A673 (cell line): ENCODE measurements at regions of chr7 and their contacts with region 1.

Region 1: GRCh38 chr7:155477476-155477875 is 19.5 kb downstream of the EN2 start:
- DNase-seq: no peak
- H3K4me3 ChIP-seq: no peak overlapping the region
- H3K27ac ChIP-seq: no peak overlapping the region
- H3K4me1 ChIP-seq: peaks cover 5% of the 10 kb centered on the region
- H3K27me3 ChIP-seq: peaks cover 30% of the 10 kb centered on the region
- CTCF ChIP-seq: no peak

Region 2: DNA sequence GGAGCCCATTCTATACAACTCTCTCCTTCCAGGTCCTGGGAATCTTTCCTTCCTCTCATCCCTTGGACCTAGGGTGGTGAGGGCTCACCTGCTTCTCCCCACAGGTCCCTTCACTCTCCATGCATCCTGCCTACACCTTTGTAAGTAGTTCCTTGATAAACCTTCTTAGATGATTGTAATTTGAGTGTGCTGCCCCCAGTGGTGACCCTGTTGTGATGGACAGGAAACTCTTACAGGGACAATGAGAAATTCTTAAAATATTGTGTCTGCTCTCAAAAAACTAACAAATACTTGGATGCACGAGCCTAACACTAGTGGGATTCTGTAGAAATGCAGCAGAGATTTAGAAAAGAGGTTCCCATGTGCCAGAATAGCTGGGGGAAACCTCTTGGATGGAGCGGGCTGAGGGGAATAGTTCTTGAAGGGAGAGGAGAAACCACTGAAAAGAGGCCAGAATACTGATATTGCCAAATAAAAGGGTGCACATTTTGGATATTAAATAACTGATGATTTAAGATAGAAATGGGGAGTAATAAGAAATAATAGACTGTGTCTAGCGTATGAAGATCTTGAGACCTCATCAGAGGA is 467.8 kb before region 1 on chr7:
- CTCF ChIA-PET with region 1: no interaction called
- POLR2A ChIA-PET with region 1: no interaction called
- intact Hi-C with region 1: no loop called
- DNase-seq: peak; percentile 25
- H3K4me3 ChIP-seq: no peak overlapping the region
- H3K27ac ChIP-seq: no peak overlapping the region
- H3K4me1 ChIP-seq: no peaks in the 10 kb centered on the region
- H3K27me3 ChIP-seq: no peaks in the 10 kb centered on the region
- CTCF ChIP-seq: peak; percentile 59

Region 3: DNA sequence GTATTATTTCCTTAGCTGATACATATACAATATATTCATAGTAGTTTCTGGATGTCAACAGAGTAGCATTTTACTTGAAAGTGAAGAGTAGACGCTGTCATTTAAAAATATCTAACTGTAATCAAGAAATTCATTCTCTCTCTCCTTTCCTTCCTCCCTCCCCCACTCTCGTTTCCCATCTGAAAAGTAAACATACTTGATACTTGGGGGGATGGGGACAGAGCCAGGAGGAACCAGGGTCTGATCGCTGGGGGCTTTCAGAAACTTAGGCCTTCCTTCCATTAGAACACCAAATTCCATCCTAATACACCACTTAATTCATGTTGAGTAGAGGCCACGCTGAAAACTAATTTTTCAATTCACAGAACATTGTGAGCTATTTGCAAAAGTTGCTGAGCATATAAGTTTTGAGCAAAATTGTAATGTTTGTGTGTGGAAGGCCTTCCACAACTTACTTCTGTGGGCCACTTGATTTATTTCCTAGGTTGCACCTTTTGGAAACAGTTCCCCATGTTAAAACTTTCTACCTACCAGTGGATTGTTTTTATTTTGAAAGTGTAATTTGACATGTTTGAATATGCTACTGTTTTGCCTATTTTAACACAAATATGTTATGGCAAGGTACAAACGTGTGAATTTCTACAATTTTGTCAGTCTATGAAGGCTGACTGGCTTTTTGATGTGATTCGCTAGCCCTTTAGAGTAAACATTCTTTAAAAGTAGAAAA is 33.7 kb after region 1 on chr7:
- CTCF ChIA-PET with region 1: no interaction called
- POLR2A ChIA-PET with region 1: interaction called, 17 read pairs
- intact Hi-C with region 1: no loop called
- DNase-seq: no peak
- H3K4me3 ChIP-seq: no peak overlapping the region
- H3K27ac ChIP-seq: no peak overlapping the region
- H3K4me1 ChIP-seq: no peaks in the 10 kb centered on the region
- H3K27me3 ChIP-seq: peaks cover 94% of the 10 kb centered on the region
- CTCF ChIP-seq: no peak

Region 4: DNA sequence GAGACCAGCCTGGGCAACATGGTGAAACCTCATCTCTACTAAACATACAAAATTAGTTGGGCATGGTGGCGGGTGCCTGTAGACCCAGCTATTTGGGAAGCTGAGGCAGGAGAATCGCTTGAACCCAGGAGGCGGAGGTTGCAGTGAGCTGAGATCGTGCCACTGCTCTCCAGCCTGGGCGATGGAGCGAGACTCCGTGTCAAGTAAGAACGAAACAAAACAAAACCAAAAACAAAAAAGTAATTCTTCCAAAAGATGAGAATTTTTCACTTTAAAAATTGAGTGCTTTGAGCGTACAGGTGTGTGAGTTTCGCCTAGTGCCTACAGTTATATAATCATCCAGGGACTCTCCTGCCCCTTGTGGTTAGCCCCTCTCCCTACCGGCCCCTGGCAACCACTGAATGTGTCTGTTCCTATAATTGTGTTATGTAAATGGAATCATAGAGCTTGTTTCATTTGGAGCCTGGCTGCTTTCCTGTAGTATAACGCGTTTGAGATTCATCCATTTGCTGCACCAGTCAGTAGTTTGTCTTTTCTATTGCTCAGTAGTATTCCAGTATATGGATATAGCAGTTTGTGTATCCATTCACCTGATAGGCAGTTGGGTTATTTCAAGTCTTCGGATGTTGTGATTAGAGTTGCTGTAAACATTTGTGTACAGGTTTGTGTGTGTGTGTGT is 247.0 kb after region 1 on chr7:
- CTCF ChIA-PET with region 1: no interaction called
- POLR2A ChIA-PET with region 1: no interaction called
- intact Hi-C with region 1: no loop called
- DNase-seq: no peak
- H3K4me3 ChIP-seq: no peak overlapping the region
- H3K27ac ChIP-seq: no peak overlapping the region
- H3K4me1 ChIP-seq: peaks cover 2% of the 10 kb centered on the region
- H3K27me3 ChIP-seq: no peaks in the 10 kb centered on the region
- CTCF ChIP-seq: peak; percentile 38